ENCODE measurements at regions of chr7 and their contacts with region 1.

Region 1: DNA sequence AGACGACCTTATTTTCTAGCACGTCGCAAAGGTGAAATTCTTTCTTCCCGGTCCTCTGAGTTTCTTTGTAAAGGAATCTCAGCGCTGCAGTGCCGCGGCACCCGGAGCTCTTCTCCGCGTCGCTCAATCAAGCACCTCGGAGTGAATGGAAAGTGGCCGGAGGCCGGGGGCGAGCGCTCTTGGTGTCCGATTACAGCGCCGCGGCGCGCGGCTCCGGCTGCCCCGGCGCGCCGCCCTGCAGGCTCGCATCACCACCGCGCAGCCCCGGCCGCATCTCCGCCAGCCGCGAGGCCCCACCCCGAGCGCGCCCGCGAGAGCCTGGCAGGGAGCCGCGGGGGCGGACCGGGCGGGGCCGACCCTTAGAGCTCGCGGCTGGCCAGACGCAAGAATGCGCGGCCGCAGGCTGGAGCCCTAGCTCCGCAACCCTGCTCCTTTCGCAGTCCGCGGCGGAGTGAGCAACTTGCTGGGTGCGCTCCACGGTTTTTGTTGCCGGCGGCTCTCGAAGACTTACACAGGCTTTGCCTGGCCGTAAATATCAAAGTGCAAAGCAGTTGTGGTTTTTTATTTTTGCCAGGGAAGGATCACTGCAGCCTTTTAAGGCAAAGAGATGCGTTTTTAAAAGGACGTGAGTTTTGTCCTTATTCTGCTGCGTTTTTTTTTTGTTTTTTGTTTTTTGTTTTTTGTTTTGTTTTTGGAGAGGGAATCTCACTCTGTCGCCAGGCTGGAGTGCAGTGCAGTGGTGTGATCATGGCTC is at the start of gene SEMA3C:
- DNase-seq: peak; percentile 78
- ATAC-seq: peak; percentile 95
- H3K4me3 ChIP-seq: peak within 1 kb of the TSS; percentile 54 to 68
- H3K27ac ChIP-seq: peak within 1 kb of the TSS; percentile 60
- H3K4me1 ChIP-seq: peaks cover 26 to 44% of the 10 kb centered on the region in 2 experiments; a peak in 3 of 4 replicates
- H3K27me3 ChIP-seq: no peaks in the 10 kb centered on the region
- CTCF ChIP-seq: no peak
- POLR2A ChIP-seq: peak; percentile 82
- RAD21 ChIP-seq: peak; percentile 47
- total RNA-seq, gene SEMA3C: 25.3 TPM

Region 2: GRCh38 chr7:80699045-80699638 is 219.9 kb before region 1 on chr7:
- CTCF ChIA-PET with region 1: interaction called, 3 read pairs
- POLR2A ChIA-PET with region 1: no interaction called
- RAD21 ChIA-PET with region 1: no interaction called
- intact Hi-C with region 1: loop called (anchors 1 kb)
- DNase-seq: peak; percentile 58
- ATAC-seq: peak; percentile 80
- H3K4me3 ChIP-seq: no peak overlapping the region
- H3K27ac ChIP-seq: no peak overlapping the region
- H3K4me1 ChIP-seq: peaks cover 0 to 8% of the 10 kb centered on the region in 2 experiments; a peak in 3 of 4 replicates
- H3K27me3 ChIP-seq: no peaks in the 10 kb centered on the region
- CTCF ChIP-seq: peak; percentile 30 to 79 (median 70); a peak in 5 of 6 replicates
- POLR2A ChIP-seq: no peak
- RAD21 ChIP-seq: peak; percentile 92

Region 3: DNA sequence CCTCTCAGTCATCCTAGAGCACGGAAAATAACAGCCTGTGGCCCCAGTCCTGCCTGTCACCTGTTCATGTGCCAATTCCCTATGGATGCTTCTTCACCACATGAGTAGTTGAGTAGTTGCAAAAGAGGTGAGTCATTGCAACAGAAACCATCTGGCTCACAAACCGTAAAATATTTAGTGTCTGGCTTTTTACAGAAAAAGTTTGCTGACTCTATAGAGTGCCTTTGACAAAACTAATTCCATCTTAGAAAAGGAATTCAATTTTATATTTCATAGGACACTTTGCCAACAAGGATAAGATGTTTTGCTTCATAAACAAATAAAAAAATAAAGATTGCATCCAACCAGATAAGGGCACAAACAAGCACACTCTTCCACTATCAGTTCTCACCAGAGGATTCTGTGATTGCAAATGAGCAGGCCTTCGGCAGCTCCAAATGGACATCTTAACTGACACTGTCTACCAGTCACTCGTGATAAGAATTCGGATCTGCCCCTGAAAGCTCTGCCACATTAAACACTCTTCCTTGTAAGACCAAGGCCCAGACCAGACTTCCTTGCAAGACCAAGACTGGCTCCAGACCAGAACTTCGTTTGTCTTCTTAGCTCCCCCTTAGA is 242.5 kb after region 1 on chr7:
- CTCF ChIA-PET with region 1: no interaction called
- POLR2A ChIA-PET with region 1: no interaction called
- RAD21 ChIA-PET with region 1: no interaction called
- intact Hi-C with region 1: loop called (anchors 5 kb)
- DNase-seq: peak; percentile 75
- ATAC-seq: peak; percentile 78
- H3K4me3 ChIP-seq: peak overlapping the region in 1 of 2 experiments; percentile 40; a peak in 2 of 4 replicates
- H3K27ac ChIP-seq: peak overlapping the region; percentile 38; the same call in 1 of the 2 replicates
- H3K4me1 ChIP-seq: peaks cover 23 to 43% of the 10 kb centered on the region in 2 experiments
- H3K27me3 ChIP-seq: no peaks in the 10 kb centered on the region
- CTCF ChIP-seq: no peak
- POLR2A ChIP-seq: no peak
- RAD21 ChIP-seq: no peak

Region 4: DNA sequence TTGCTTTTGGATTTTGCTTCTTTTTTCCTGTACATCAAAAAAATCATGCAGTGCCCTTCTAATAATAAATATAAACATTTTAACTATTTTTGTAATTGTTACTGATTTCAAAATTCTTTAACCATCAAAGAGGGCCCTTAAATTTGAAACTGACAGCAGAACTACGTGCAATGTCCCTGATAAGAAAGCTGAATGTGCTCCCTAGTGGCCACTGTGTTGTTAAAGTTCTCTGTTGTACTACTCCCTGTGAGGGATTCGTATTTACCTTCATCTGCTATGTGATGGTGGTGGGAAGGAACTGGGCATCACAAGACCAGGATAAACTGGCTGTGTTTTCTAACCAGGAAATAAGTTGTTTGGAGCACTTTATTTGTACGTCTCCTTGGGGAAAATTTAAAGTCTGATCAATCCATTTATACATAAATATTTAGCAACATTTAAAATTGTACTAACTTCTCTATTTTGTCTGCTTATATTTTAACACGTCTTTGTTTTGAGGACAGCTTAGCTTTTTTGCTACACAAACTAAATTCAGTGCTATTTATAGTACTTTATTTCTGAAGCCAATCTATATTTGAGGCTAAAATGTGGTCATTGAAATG is 528.4 kb after region 1 on chr7:
- CTCF ChIA-PET with region 1: interaction called, 4 read pairs
- POLR2A ChIA-PET with region 1: interaction called, 3 read pairs
- RAD21 ChIA-PET with region 1: no interaction called
- intact Hi-C with region 1: loop called (anchors 5 kb)
- DNase-seq: peak; percentile 47
- ATAC-seq: peak; percentile 95
- H3K4me3 ChIP-seq: no peak overlapping the region
- H3K27ac ChIP-seq: no peak overlapping the region
- H3K4me1 ChIP-seq: no peaks in the 10 kb centered on the region
- H3K27me3 ChIP-seq: no peaks in the 10 kb centered on the region
- CTCF ChIP-seq: peak; percentile 54 to 62 (median 55); a peak in 5 of 6 replicates
- POLR2A ChIP-seq: no peak
- RAD21 ChIP-seq: peak; percentile 84

Region 5: GRCh38 chr7:81469869-81470723 is 551.0 kb after region 1 on chr7:
- CTCF ChIA-PET with region 1: interaction called, 27 read pairs
- POLR2A ChIA-PET with region 1: interaction called, 7 read pairs
- RAD21 ChIA-PET with region 1: interaction called in 1 of 2 experiments, 3 read pairs
- intact Hi-C with region 1: loop called (anchors 5 kb)
- DNase-seq: peak; percentile 73
- ATAC-seq: peak; percentile 96
- H3K4me3 ChIP-seq: no peak overlapping the region
- H3K27ac ChIP-seq: no peak overlapping the region
- H3K4me1 ChIP-seq: peaks cover 0 to 9% of the 10 kb centered on the region in 2 experiments; a peak in 1 of 4 replicates
- H3K27me3 ChIP-seq: no peaks in the 10 kb centered on the region
- CTCF ChIP-seq: peak; percentile 58 to 79 (median 66); a peak in 5 of 6 replicates
- POLR2A ChIP-seq: no peak
- RAD21 ChIP-seq: peak; percentile 86

Measured in HCT116 (cell line).